ENCODE measurements at regions of chr1 and their contacts with region 1.

Region 1: GRCh38 chr1:84077476-84078107 is 66.5 kb upstream of the PRKACB start:
- DNase-seq: peak; percentile 63
- H3K4me3 Mint-ChIP-seq: peak overlapping the region; percentile 87
- H3K27ac Mint-ChIP-seq: peak overlapping the region; percentile 71
- H3K4me1 Mint-ChIP-seq: peaks cover 17% of the 10 kb centered on the region
- H3K27me3 Mint-ChIP-seq: peaks cover 23% of the 10 kb centered on the region

Region 2: DNA sequence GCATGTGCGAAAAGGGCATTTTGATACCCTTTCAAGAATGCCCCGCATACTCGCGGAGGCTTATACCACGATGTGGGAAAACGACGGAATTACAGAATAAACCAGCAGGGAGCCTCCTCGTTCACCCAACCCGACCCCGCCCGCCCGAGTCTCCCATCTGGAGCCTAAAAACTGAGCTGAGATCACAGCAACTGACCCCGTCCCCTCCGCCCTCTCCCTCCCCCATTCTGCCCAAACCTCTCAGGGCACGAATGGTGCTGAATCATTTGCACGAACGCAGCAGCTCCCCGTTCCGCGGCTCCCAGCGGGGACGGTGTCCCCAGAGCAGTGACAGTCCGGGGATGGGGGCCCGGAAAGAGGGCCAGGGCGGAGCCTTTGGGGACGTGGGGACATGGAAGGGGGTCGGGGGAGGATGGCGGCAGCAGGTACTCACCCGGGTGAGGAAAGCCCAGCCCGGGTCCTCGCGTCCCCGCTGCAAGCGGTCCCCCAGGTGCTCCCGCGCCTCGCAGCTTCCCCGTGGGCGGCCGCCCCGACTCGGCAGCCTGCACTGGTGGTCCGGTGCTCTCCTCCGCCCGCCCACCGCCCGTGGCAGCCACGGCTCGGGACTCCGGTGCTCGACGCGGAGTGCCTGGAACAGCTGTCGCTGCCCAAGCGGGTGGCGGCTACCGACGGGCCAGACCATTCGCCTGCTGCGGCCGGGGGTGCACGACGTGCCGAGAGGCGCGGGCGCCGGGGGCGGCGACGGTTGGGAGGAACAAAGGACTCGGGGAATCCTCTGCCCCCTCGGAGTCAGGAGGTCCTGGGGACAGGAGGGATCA is 78.9 kb before region 1 on chr1 and contains the start of gene TTLL7:
- intact Hi-C with region 1: loop called (anchors 1 kb)
- DNase-seq: peak; percentile 62
- H3K4me3 Mint-ChIP-seq: peak within 1 kb of the TSS; percentile 89
- H3K27ac Mint-ChIP-seq: peak within 1 kb of the TSS; percentile 56
- H3K4me1 Mint-ChIP-seq: peaks cover 24% of the 10 kb centered on the region
- H3K27me3 Mint-ChIP-seq: peaks cover 60% of the 10 kb centered on the region
- total RNA-seq, gene TTLL7: 0.15 and 0.29 TPM in 2 replicates

Region 3: GRCh38 chr1:84089470-84090266 is 12.1 kb after region 1 on chr1:
- intact Hi-C with region 1: loop called (anchors 1 kb)
- DNase-seq: no peak
- H3K4me3 Mint-ChIP-seq: no peak overlapping the region
- H3K27ac Mint-ChIP-seq: no peak overlapping the region
- H3K4me1 Mint-ChIP-seq: peaks cover 28% of the 10 kb centered on the region
- H3K27me3 Mint-ChIP-seq: no peaks in the 10 kb centered on the region

Region 4: GRCh38 chr1:84298328-84298683 is 220.7 kb after region 1 on chr1:
- intact Hi-C with region 1: loop called (anchors 5 kb)
- DNase-seq: peak; percentile 46
- H3K4me3 Mint-ChIP-seq: peak overlapping the region; percentile 86
- H3K27ac Mint-ChIP-seq: peak overlapping the region; percentile 68
- H3K4me1 Mint-ChIP-seq: peaks cover 39% of the 10 kb centered on the region
- H3K27me3 Mint-ChIP-seq: peaks cover 5% of the 10 kb centered on the region

Region 5: DNA sequence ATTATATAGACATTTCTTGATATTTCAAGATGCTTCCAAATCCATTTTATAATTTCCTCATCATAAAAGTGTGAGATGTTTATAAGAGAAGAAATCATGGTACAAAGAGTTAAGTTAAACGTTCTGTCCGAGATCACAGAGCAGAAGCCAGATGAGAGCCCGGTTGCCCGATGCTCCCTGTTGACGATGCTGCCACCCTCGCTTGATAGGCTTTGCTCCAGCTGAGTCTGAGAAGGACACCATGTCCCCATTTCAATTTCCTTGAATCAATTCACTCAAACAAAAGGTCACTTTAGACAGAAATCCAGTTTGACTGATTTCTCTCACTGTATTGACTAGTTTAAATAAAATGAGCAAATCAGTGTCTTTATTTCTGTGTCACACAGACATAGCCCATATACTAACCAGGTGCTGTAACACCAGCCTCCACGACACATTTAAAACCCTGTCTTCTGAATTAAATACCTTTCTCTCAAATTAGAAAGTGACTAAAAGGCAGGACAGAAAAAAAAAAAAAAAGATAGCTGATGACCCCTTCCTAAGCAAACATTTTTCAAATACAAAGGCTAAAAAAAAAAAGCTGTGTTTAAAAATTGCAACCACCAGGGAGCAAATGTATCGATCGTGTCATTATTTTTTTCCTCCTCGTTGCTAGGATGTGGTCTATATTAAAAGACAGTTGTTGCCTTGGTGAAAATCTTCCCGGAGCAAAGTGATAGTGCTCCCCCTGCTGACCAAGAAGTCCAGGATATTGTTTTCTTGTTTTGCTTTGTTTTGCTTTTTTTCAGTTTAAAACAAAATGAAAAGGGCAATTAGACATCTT is 355.9 kb after region 1 on chr1:
- intact Hi-C with region 1: loop called (anchors 5 kb)
- DNase-seq: peak; percentile 54
- H3K4me3 Mint-ChIP-seq: peak overlapping the region; percentile 41
- H3K27ac Mint-ChIP-seq: peak overlapping the region; percentile 9
- H3K4me1 Mint-ChIP-seq: peaks cover 11% of the 10 kb centered on the region
- H3K27me3 Mint-ChIP-seq: no peaks in the 10 kb centered on the region

Region 6: DNA sequence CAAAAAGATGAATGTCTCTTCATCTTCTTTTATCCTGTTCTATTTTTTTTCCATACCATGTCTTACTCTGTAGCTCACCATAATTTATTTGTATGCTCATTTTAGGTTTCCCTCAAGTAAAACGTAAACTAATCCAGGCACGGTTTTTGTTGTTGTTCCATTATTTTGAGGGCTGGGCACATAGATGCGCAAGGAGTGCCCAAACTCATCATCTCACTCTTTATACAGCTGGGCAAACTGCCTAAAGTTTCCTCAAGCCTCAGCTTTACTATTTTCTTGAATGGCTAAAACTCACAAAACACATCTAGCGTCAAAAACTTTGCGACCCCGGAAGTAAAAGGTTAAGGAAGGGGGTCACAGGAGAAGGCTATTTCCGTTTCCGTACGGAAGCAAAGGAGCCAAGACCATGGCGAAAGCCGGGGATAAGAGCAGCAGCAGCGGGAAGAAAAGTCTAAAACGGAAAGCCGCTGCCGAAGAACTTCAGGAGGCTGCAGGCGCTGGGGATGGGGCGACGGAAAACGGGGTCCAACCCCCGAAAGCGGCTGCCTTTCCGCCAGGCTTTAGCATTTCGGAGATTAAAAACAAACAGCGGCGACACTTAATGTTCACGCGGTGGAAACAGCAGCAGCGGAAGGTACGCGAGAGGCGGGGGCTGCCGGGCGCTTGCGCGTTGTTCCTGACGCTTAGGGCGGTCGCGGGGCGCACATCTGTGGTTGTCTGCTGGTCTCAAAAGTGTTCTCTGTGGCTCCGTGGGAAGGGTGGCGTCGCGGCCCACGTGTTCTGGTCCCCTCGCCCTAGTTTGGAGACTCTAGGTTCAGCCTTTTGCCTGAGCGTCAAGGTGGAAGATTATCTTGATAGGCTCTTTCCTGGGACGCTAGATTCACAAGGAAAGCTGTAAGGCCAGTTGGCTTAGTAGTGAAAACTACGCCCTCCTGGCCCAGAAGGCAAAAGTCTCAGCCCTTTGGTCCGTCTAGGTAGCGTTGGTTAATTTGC is 401.6 kb after region 1 on chr1 and contains the start of gene RPF1:
- intact Hi-C with region 1: loop called (anchors 1 kb)
- DNase-seq: peak; percentile 70
- H3K4me3 Mint-ChIP-seq: peak within 1 kb of the TSS; percentile 98
- H3K27ac Mint-ChIP-seq: peak within 1 kb of the TSS; percentile 97
- H3K4me1 Mint-ChIP-seq: peaks cover 34% of the 10 kb centered on the region
- H3K27me3 Mint-ChIP-seq: peaks cover 28% of the 10 kb centered on the region
- total RNA-seq, gene RPF1: 65.2 and 65.5 TPM in 2 replicates

Region 7: DNA sequence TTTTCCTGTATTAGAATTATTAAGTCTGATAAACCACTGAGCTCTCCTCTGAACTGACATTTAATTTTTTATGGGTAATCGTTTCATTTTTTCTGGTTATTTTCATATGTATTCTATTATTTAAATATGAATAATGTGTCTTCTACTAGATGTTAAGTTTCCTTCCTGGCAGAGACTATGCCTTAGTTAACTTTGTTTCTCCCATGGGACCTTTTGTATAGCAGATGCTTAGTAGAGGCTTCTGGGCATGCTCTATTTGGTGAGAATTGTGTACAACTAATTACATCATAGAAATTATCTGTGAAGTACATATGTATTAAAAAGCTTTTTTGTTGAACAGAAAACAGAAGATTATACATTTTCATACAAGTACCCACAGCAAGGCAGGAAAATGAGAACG is 473.2 kb after region 1 on chr1:
- intact Hi-C with region 1: no loop called
- DNase-seq: no peak
- H3K4me3 Mint-ChIP-seq: no peak overlapping the region
- H3K27ac Mint-ChIP-seq: no peak overlapping the region
- H3K4me1 Mint-ChIP-seq: no peaks in the 10 kb centered on the region
- H3K27me3 Mint-ChIP-seq: no peaks in the 10 kb centered on the region

Region 8: GRCh38 chr1:85048296-85049064 is 970.9 kb after region 1 on chr1 and contains the start of gene MCOLN3:
- intact Hi-C with region 1: loop called (anchors 10 kb)
- DNase-seq: peak; percentile 28
- H3K4me3 Mint-ChIP-seq: peak within 1 kb of the TSS; percentile 83
- H3K27ac Mint-ChIP-seq: no peak within 1 kb of the TSS
- H3K4me1 Mint-ChIP-seq: peaks cover 37% of the 10 kb centered on the region
- H3K27me3 Mint-ChIP-seq: peaks cover 52% of the 10 kb centered on the region
- total RNA-seq, gene MCOLN3: 1.3 and 1.7 TPM in 2 replicates